Activated naive CD4-positive, alpha-beta T cell treated with anti-CD3 and anti-CD28 coated beads, Interleukin-2, amount 10 ng/mL, durations not matched to agents 7 days and 5 days (primary cell): ENCODE measurements at regions of chrX and their contacts with region 1.

Region 1: GRCh38 chrX:38754102-38754790 is 47.0 kb upstream of the MID1IP1 start:
- DNase-seq: peak; percentile 49
- H3K4me3 Mint-ChIP-seq: no peak overlapping the region
- H3K27ac Mint-ChIP-seq: no peak overlapping the region
- H3K4me1 Mint-ChIP-seq: no peaks in the 10 kb centered on the region
- H3K27me3 Mint-ChIP-seq: no peaks in the 10 kb centered on the region

Region 2: GRCh38 chrX:38768079-38768478 is 13.8 kb after region 1 on chrX:
- CTCF ChIA-PET with region 1: no interaction called
- DNase-seq: no peak
- H3K4me3 Mint-ChIP-seq: no peak overlapping the region
- H3K27ac Mint-ChIP-seq: no peak overlapping the region
- H3K4me1 Mint-ChIP-seq: no peaks in the 10 kb centered on the region
- H3K27me3 Mint-ChIP-seq: no peaks in the 10 kb centered on the region

Region 3: DNA sequence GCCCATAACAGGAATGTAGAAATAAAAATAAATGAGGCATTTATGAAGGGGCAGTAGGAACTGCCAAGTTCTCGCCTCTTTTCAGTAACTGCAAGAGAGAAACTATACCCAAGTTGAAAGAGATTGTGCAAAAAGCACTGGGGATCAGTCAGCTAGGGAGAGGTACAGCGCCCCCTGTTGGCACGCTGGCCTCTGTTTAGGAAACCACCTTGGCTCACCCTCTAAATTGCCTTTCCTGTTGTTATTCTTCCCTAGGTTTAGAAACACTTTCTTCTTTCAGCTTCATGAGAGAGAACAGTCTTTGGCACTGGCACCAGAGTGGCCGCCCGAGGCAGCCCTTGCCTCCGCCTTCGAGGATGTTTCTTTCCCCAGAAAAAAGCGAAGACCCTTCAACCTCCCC is 395.5 kb after region 1 on chrX:
- CTCF ChIA-PET with region 1: interaction called, 14 read pairs
- DNase-seq: peak; percentile 70
- H3K4me3 Mint-ChIP-seq: no peak overlapping the region
- H3K27ac Mint-ChIP-seq: no peak overlapping the region
- H3K4me1 Mint-ChIP-seq: no peaks in the 10 kb centered on the region
- H3K27me3 Mint-ChIP-seq: no peaks in the 10 kb centered on the region